Head of caudate nucleus (tissue), 42 donors: ENCODE measurements at regions of chr12 and their contacts with region 1.

Region 1: GRCh38 chr12:62817556-62818271 is 117.2 kb downstream of the PPM1H start:
- DNase-seq: peak in 26 of 42 donors; percentile 16 to 68 (median 42)

Region 2: DNA sequence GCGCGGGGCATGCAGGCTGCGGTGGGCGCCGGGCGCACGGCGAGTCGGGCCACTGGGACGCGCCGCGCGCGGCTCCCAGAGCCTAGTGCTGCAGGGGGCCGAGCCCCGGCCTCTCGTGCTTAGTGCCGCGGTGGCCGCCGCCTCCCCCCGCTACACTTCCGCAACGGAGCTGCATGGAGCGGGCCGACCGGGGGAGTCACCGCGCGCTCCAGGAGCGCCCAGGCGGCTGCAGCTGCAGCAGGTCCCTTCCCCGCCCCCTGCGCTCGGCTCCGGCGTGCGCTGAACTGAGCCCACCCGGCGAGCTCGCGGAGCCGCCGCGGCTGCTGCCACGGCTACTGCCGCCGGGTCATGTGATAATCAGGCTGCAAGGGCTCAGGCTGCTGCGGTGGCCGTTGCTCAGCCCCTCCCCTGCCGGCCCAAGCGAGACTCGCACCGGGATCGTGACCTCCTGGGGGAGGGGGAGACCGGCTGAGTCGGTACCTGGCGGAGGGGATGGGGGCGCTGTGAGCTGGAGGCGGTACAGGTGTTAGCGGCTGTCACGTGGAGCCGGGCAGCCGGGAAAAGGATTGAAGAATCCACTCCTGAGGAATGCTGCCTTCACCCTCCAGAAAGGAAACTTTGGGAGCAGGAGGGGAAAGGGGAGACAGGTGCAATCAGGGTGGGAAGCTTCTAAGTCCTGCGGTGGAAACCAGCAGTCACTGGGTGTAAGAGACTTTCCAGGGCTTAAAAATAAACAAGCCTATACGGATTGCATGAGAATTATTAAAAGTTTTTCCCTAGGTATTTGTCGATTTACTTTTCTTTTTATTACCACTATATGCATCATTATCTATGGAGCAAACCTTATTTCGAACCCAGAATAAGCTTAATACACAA is 117.3 kb after region 1 on chr12 and contains the start of gene PPM1H:
- intact Hi-C with region 1: loop called (anchors 5 kb)
- DNase-seq: peak; percentile 73 to 93 (median 86)